ENCODE measurements at regions of chr11 and their contacts with region 1.

Region 1: DNA sequence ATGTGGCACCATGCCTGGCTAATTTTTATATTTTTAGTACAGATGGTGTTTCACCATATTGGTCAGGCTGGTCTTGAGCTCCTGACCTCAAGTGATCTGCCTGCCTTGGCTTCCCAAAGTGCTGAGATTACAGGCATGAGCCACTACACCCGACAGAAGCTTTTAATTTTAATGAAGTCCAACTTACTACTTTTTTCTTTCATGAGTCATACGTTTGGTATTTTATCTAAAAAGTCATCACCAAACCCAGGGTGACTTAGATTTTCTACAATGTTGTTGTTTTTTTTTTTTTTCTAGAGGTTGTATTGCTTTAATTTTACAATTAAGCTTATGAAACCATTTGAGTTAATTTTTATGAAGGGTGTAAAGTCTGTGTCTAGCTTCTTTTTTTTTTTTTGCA is 34.9 kb downstream of the JRKL start:
- DNase-seq: peak; percentile 61
- ATAC-seq: no peak
- H3K4me3 ChIP-seq: no peak overlapping the region
- H3K27ac ChIP-seq: no peak overlapping the region
- H3K4me1 ChIP-seq: 0 out of 2 replicates have a peak, but pooled peaks cover 7% of the 10 kb centered on the region
- H3K27me3 ChIP-seq: peaks cover 18% of the 10 kb centered on the region
- CTCF ChIP-seq: no peak

Region 2: DNA sequence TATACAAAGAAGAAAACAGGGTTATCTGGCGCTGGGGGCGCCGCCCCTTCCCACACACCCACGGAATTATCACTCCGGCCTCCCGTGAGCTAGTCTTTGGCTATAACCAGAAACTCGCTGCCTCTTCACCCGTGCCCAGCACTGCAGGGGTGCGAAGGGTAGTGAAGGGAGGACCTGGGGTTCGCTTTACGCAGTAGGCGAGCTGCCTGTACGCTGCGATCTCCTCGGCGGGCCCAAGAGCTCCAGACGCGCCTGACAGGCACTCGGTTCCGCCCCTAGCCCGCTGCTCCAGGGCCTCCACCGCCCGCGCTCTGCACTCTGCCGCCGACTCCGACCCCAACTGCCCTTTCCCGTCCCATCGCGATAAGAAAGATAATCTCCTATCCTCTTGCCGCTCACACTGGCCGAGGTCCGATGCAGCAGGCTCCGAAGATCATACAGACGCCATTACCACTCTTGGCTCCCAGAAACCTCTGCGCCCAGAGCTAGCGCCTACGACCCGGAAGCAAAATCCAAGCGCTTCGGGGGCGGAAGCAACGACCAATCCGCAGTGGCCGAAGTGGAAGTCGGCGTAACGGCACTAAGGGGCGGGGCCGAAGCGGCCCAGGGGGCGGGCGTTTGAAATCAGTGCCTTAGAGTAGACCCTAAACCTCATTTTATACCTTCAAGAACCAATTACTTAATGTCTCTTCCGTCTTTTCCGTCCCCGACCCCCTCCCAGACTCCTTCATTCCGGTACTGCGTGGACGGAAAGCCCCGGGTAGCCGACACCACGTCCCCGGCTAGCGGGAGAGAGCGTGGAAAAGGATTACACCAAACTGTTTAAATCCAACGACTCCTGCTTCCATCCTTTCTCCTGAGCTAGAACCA is 1451.4 kb before region 1 on chr11 and contains the starts of genes CWC15 and KDM4D:
- CTCF ChIA-PET with region 1: interaction called, 6 read pairs
- POLR2A ChIA-PET with region 1: no interaction called
- intact Hi-C with region 1: loop called (anchors 5 kb)
- DNase-seq: peak; percentile 98
- ATAC-seq: peak; percentile 99
- H3K4me3 ChIP-seq: peak within 1 kb of the TSS; percentile 83
- H3K27ac ChIP-seq: peak within 1 kb of the TSS; percentile 13; the same call in 1 of the 2 replicates
- H3K4me1 ChIP-seq: peaks cover 21% of the 10 kb centered on the region
- H3K27me3 ChIP-seq: no peaks in the 10 kb centered on the region
- CTCF ChIP-seq: no peak
- total RNA-seq, gene CWC15: 56.9 and 63.5 TPM in 2 replicates
- total RNA-seq, gene KDM4D: 2.7 and 4.1 TPM in 2 replicates

Region 3: DNA sequence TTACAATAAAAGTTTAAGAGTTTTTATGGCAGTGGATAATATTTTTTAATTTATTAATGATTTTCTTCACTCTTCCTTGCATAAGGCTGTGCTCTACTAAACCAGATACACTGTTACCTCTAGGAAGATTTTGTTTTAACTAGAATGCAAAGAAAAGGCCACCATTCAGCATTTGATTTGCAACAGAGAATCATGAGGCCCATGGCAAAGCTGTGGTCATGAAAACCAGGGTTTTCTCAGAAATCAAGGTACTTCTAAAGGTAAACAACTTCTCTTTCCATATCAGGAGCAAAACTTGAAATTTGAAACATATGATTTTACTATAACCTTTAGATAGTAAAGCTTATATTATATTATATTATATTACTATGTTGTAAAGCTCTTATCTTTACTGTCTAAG is 729.5 kb before region 1 on chr11:
- CTCF ChIA-PET with region 1: no interaction called
- POLR2A ChIA-PET with region 1: interaction called, 12 read pairs
- intact Hi-C with region 1: no loop called
- DNase-seq: no peak
- ATAC-seq: no peak
- H3K4me3 ChIP-seq: no peak overlapping the region
- H3K27ac ChIP-seq: no peak overlapping the region
- H3K4me1 ChIP-seq: no peaks in the 10 kb centered on the region
- H3K27me3 ChIP-seq: peaks cover 32% of the 10 kb centered on the region
- CTCF ChIP-seq: no peak

Region 4: GRCh38 chr11:95764267-95764898 is 660.3 kb before region 1 on chr11:
- CTCF ChIA-PET with region 1: no interaction called
- POLR2A ChIA-PET with region 1: no interaction called
- intact Hi-C with region 1: loop called (anchors 5 kb)
- DNase-seq: peak; percentile 76
- ATAC-seq: peak; percentile 85
- H3K4me3 ChIP-seq: no peak overlapping the region
- H3K27ac ChIP-seq: no peak overlapping the region
- H3K4me1 ChIP-seq: no peaks in the 10 kb centered on the region
- H3K27me3 ChIP-seq: peaks cover 23% of the 10 kb centered on the region
- CTCF ChIP-seq: peak; percentile 86

Region 5: GRCh38 chr11:96486894-96487595 is 62.4 kb after region 1 on chr11:
- CTCF ChIA-PET with region 1: no interaction called
- POLR2A ChIA-PET with region 1: no interaction called
- intact Hi-C with region 1: no loop called
- DNase-seq: peak; percentile 95
- ATAC-seq: peak; percentile 99
- H3K4me3 ChIP-seq: peak overlapping the region; percentile 51
- H3K27ac ChIP-seq: peak overlapping the region; percentile 51
- H3K4me1 ChIP-seq: peaks cover 11% of the 10 kb centered on the region
- H3K27me3 ChIP-seq: no peaks in the 10 kb centered on the region
- CTCF ChIP-seq: no peak

Region 6: GRCh38 chr11:96753997-96754396 is 329.3 kb after region 1 on chr11:
- CTCF ChIA-PET with region 1: no interaction called
- POLR2A ChIA-PET with region 1: interaction called, 21 read pairs
- intact Hi-C with region 1: no loop called
- DNase-seq: peak; percentile 59
- ATAC-seq: peak; percentile 83
- H3K4me3 ChIP-seq: no peak overlapping the region
- H3K27ac ChIP-seq: no peak overlapping the region
- H3K4me1 ChIP-seq: peaks cover 12% of the 10 kb centered on the region
- H3K27me3 ChIP-seq: no peaks in the 10 kb centered on the region; the same call in 1 of the 2 replicates
- CTCF ChIP-seq: no peak